ENCODE measurements at regions of chr1 and their contacts with region 1.

Region 1: GRCh38 chr1:181142096-181142958 is 53.8 kb downstream of the IER5 start:
- DNase-seq: peak; percentile 94
- H3K4me3 ChIP-seq: peak overlapping the region; percentile 5 to 42 (median 29)
- H3K27ac ChIP-seq: peak overlapping the region in 3 of 4 donors; percentile 34 to 56 (median 39)
- H3K4me1 ChIP-seq: peaks cover 0 to 16% (median 11%) of the 10 kb centered on the region in 4 donors
- H3K27me3 ChIP-seq: no peaks in the 10 kb centered on the region
- CTCF ChIP-seq: peak; percentile 94 to 98 (median 95)
- EP300 ChIP-seq: no peak
- POLR2A ChIP-seq: no peak

Region 2: GRCh38 chr1:180515864-180516388 is 626.4 kb before region 1 on chr1:
- intact Hi-C with region 1: loop called (anchors 10 kb)
- DNase-seq: peak; percentile 86
- H3K4me3 ChIP-seq: no peak overlapping the region
- H3K27ac ChIP-seq: no peak overlapping the region
- H3K4me1 ChIP-seq: peaks cover 0 to 9% (median 0%) of the 10 kb centered on the region in 4 donors
- H3K27me3 ChIP-seq: no peaks in the 10 kb centered on the region
- CTCF ChIP-seq: peak; percentile 46 to 79 (median 72)
- EP300 ChIP-seq: no peak
- POLR2A ChIP-seq: no peak

Region 3: DNA sequence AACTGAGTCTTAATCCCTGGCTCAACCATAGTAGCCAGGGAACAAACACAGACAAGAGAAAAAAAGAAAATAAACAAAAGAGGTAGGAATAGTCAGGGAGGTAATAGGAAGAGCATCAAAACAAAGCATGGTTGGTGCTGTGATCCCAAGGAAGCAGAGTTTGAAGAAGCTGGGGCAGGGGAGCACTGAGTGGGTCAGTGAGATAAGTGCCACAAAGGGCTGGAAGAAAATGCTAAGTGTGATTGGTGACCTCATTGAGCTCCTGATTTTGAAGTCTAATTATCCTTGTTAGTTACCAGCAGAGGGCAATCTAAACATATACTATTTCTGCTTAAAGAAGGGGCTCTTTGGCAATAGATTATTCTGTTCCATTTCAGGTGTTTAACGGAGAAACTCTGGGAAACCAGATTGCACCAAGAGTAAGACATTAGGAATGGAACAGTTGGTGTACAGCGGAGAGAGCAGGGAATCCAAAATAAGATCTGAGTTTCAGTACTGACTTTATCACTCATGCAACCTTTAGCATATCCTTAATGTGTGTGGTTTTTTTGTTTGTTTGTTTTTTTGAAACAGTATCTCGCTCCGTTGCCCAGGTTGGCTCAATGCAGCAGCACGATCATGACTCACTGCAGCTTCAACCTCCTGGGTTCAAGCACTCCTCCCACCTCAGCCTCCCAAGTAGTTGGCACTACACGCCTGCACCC is 260.4 kb before region 1 on chr1:
- intact Hi-C with region 1: loop called (anchors 5 kb)
- DNase-seq: no peak
- H3K4me3 ChIP-seq: no peak overlapping the region
- H3K27ac ChIP-seq: no peak overlapping the region
- H3K4me1 ChIP-seq: no peaks in the 10 kb centered on the region
- H3K27me3 ChIP-seq: no peaks in the 10 kb centered on the region
- CTCF ChIP-seq: peak; percentile 21 to 46 (median 36)
- EP300 ChIP-seq: no peak
- POLR2A ChIP-seq: no peak

Region 4: DNA sequence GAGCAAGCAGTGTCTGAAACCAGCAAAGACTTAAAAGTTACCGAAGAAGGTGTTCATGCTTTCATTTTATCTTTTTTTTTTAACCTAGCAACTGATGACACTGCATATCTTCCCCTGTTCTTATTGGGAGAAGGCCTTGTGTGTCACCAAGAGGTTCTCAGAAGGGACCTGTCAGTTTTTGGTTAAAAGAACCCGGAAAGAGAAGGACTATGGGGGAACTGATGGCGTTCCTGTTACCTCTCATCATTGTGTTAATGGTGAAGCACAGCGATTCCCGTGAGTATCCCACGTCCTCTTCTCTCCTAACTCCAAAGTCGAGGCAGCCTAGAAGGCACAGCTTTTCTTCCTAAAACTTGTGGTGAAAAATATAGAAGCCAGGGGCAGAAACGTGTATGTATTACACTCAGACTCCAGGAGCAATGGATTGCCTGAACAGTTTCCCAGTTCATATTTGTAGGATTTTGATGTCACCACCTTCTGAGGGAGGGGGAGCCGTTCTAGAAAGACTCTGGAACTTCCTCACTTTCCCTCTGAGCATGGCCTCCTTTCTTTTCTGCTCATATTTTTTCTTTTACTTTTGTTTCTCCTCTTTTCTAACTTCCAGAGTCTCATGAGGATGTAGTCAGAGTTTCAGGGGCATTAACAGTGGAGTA is 108.4 kb before region 1 on chr1 and contains the start of gene MR1:
- intact Hi-C with region 1: loop called (anchors 1 kb)
- DNase-seq: no peak
- H3K4me3 ChIP-seq: peak within 1 kb of the TSS; percentile 36 to 52 (median 49)
- H3K27ac ChIP-seq: peak within 1 kb of the TSS; percentile 88 to 92 (median 92)
- H3K4me1 ChIP-seq: peaks cover 0 to 48% (median 28%) of the 10 kb centered on the region in 4 donors
- H3K27me3 ChIP-seq: no peaks in the 10 kb centered on the region
- CTCF ChIP-seq: no peak
- EP300 ChIP-seq: no peak
- POLR2A ChIP-seq: peak in 1 of 2 donors; percentile 68
- total RNA-seq, gene MR1: 10.3 to 12.2 (median 11.0) TPM

Region 5: DNA sequence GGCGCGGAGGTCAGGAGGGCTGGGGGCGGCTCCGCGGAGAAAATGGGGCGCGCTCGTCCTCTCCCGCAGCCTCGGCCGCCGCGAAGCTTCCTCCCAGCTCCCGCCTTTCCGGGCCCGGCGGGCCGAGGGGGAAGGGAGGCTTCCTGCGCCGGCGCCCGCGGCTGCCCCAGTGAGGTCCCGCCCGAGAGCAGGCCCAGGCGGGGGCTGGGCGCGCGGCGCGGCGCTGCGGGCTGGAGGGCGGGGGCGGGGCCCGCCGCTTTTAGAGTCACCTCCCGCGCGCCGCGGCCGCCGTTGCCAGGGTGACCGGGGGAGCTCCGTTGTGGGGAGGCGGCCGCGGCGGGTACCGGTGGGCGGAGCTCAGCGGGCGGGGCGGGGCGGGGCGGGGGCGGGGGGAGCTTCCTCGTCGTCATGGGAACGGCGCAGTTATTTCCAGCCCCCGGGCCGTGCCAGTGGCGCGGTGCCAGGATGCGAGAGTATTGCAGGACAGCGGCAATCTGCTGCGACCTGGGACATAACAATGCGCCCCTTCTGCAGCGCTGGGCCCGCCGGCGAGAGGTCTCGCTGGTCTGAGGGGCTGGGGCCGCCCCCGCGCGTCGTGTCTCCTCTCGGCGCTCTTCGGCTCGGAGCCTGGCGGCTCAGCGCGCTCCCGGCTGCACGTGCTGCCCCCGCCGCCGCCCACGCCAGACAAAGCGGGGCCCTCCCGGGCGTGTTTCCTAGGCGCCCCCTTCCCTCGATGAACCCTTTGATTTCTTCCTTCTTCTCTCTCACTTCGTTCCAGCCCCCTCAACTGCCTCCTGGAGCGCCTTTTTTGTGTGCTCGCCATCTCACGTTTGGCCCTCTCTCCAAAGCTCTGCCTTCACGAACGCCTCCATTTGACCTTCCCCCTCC is 36.9 kb before region 1 on chr1:
- intact Hi-C with region 1: loop called (anchors 5 kb)
- DNase-seq: peak; percentile 98
- H3K4me3 ChIP-seq: peak overlapping the region; percentile 51 to 80 (median 70)
- H3K27ac ChIP-seq: peak overlapping the region; percentile 88 to 92 (median 90)
- H3K4me1 ChIP-seq: peaks cover 0 to 24% (median 18%) of the 10 kb centered on the region in 4 donors
- H3K27me3 ChIP-seq: no peaks in the 10 kb centered on the region
- CTCF ChIP-seq: no peak
- EP300 ChIP-seq: no peak
- POLR2A ChIP-seq: peak; percentile 82 to 87